ENCODE measurements at regions of chr9 and their contacts with region 1.

Region 1: GRCh38 chr9:85940832-85941621 is at the start of gene NAA35:
- DNase-seq: peak; percentile 99
- H3K4me3 ChIP-seq: peak within 1 kb of the TSS; percentile 86 to 98 (median 90)
- H3K27ac ChIP-seq: peak within 1 kb of the TSS; percentile 93 to 99 (median 98)
- H3K4me1 ChIP-seq: peaks cover 14 to 41% (median 22%) of the 10 kb centered on the region in 4 donors
- H3K27me3 ChIP-seq: no peaks in the 10 kb centered on the region
- CTCF ChIP-seq: no peak
- EP300 ChIP-seq: no peak
- POLR2A ChIP-seq: no peak
- total RNA-seq, gene NAA35: 24.7 to 51.5 (median 34.5) TPM

Region 2: DNA sequence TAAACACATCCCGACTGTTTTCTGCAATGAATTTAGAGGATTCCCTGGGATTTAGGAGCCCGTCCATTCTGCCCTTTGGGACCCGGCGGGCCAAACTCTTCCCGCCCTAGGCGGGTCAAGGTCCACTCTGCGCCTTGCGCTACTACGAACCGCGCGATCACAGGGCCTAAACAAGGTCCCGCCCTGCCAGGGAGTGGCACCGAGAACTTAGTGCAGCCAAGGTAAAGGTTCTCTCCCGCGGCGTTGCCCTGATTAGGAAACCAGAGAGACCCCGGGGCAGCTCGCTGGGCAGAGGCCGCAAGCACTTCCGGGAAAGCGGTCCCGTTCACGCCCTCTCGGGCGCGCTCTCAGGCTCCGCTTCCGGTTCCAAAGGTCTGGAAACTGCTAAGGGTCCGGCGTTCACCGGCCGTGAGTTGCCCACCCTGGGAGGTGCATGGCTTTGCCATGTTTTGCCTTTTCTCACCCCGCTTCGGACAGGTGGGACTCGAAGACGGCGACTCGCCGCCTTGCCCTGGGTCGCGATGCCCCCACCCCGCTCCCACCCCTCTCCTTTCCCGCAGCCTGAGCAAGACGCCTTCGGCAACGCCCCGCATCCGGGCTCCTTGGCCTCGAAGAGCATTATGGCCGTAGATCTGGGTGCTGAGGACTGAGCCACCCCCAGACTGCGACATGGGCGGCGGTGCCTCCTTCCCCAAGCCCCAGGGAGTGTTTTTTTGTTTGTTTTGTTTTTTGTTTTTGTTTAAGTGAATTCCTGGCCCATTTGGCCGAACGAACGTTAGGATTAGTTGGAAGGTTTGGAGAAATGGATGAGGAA is 1984.4 kb before region 1 on chr9:
- in situ Hi-C with region 1: loop called in 1 of 4 experiments (anchors 25 kb)
- intact Hi-C with region 1: no loop called
- DNase-seq: peak; percentile 91
- H3K4me3 ChIP-seq: peak overlapping the region; percentile 58 to 79 (median 66)
- H3K27ac ChIP-seq: peak overlapping the region; percentile 89 to 93 (median 90)
- H3K4me1 ChIP-seq: peaks cover 4 to 23% (median 8%) of the 10 kb centered on the region in 4 donors
- H3K27me3 ChIP-seq: no peaks in the 10 kb centered on the region
- CTCF ChIP-seq: no peak
- EP300 ChIP-seq: no peak
- POLR2A ChIP-seq: peak; percentile 67

Region 3: DNA sequence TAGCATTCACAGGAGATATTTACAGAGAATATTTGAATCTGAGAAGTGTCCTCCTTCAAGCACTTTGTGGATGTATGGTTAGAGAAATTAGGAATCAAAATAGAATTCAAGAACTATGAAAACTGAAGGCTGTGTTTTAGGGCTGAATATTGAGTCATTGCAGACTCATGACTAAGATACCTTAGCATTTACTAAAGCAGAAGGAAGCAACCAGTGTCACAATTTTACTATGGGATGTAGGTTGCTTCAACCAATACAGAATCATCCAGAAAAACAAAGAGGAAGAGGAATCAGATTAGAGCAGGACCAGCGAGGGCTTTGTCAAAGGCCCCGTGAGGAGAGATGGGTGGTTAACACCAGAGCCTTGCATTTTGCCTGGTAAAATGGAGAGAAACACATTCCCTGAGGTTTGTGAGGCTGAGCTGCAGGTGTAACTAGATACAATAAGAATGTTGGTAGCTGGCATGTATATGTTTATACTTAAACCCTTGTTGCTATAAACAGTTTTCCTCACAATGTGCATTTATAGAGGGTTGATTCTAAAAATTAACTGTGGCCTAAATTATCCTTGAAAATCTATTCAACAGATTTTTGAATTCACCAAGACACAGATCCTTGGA is 717.4 kb before region 1 on chr9:
- in situ Hi-C with region 1: no loop called
- intact Hi-C with region 1: no loop called
- DNase-seq: no peak
- H3K4me3 ChIP-seq: no peak overlapping the region
- H3K27ac ChIP-seq: no peak overlapping the region
- H3K4me1 ChIP-seq: no peaks in the 10 kb centered on the region
- H3K27me3 ChIP-seq: no peaks in the 10 kb centered on the region
- CTCF ChIP-seq: no peak
- EP300 ChIP-seq: no peak
- POLR2A ChIP-seq: no peak

Region 4: GRCh38 chr9:86122311-86122710 is 181.3 kb after region 1 on chr9:
- in situ Hi-C with region 1: no loop called
- intact Hi-C with region 1: no loop called
- DNase-seq: no peak
- H3K4me3 ChIP-seq: no peak overlapping the region
- H3K27ac ChIP-seq: no peak overlapping the region
- H3K4me1 ChIP-seq: peaks cover 3 to 10% (median 7%) of the 10 kb centered on the region in 4 donors
- H3K27me3 ChIP-seq: no peaks in the 10 kb centered on the region
- CTCF ChIP-seq: no peak
- EP300 ChIP-seq: no peak
- POLR2A ChIP-seq: no peak

Region 5: GRCh38 chr9:86282077-86282978 is 341.3 kb after region 1 on chr9 and contains the start of gene ISCA1:
- in situ Hi-C with region 1: loop called in 1 of 4 experiments (anchors 25 kb)
- intact Hi-C with region 1: no loop called
- DNase-seq: peak; percentile 98
- H3K4me3 ChIP-seq: peak within 1 kb of the TSS; percentile 64 to 89 (median 78)
- H3K27ac ChIP-seq: peak within 1 kb of the TSS; percentile 96 to 99 (median 97)
- H3K4me1 ChIP-seq: peaks cover 15 to 25% (median 22%) of the 10 kb centered on the region in 4 donors
- H3K27me3 ChIP-seq: no peaks in the 10 kb centered on the region
- CTCF ChIP-seq: no peak
- EP300 ChIP-seq: peak; percentile 22
- POLR2A ChIP-seq: peak; percentile 96
- total RNA-seq, gene ISCA1: 2.2 to 38.4 (median 29.4) TPM